H1 (cell line): ENCODE measurements at regions of chrX and their contacts with region 1.

Region 1: DNA sequence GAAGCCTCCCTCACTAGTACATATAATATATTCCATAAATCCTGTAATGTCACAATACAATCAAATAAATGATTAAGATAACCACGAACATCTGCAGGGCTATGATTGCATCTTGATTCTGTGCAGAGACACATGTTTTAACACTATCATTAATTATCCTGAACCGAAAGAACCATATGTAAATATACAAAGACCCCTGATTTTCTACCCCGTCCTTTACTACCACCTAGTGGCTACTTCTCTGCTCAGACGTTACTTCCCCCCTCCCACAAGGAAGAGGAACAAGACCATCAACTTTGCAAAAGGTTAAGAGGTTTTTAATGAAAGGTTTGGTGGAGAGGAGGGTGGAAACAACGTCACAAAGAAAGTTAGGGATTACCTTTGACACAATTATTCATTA is 134.0 kb downstream of the COL4A6 start:
- DNase-seq: no peak
- H3K4me3 ChIP-seq: no peak overlapping the region
- H3K27ac ChIP-seq: no peak overlapping the region
- H3K4me1 ChIP-seq: peaks cover 0 to 3% (median 1%) of the 10 kb centered on the region in 4 experiments; a peak in 3 of 7 replicates
- H3K27me3 ChIP-seq: no peaks in the 10 kb centered on the region
- CTCF ChIP-seq: peak in 2 of 3 experiments; percentile 46 to 51; a peak in 3 of 4 replicates
- EP300 ChIP-seq: no peak
- POLR2A ChIP-seq: no peak
- RAD21 ChIP-seq: peak; percentile 65 to 73

Region 2: DNA sequence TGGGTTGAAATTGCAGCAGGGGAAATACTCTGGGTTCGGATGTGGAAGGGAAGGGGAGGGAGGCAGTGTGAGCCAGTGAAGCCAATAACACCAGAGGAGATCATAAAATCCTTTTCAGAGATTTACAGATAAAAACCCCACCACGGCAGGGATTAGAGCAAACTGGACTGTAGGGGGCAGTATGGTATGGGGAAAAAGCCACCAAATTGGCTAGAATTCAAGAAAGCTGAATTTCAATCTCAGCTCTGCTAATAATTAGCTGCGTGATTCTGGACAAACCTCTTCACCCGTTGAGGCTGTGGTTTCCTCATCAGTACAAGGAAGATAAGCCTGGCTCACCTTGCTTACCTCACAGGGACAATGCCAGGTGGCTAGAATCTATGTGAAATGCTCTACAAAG is 104.5 kb before region 1 on chrX:
- CTCF ChIA-PET with region 1: interaction called, 12 read pairs
- POLR2A ChIA-PET with region 1: no interaction called
- DNase-seq: peak in 1 of 2 experiments; percentile 50
- H3K4me3 ChIP-seq: no peak overlapping the region
- H3K27ac ChIP-seq: no peak overlapping the region
- H3K4me1 ChIP-seq: no peaks in the 10 kb centered on the region
- H3K27me3 ChIP-seq: no peaks in the 10 kb centered on the region
- CTCF ChIP-seq: peak in 2 of 3 experiments; percentile 41 to 61; a peak in 2 of 4 replicates
- EP300 ChIP-seq: no peak
- POLR2A ChIP-seq: no peak
- RAD21 ChIP-seq: peak; percentile 60 to 64

Region 3: GRCh38 chrX:108245459-108245858 is 58.8 kb before region 1 on chrX:
- CTCF ChIA-PET with region 1: interaction called, 11 read pairs
- POLR2A ChIA-PET with region 1: no interaction called
- DNase-seq: no peak
- H3K4me3 ChIP-seq: no peak overlapping the region
- H3K27ac ChIP-seq: no peak overlapping the region
- H3K4me1 ChIP-seq: no peaks in the 10 kb centered on the region
- H3K27me3 ChIP-seq: no peaks in the 10 kb centered on the region
- CTCF ChIP-seq: peak in 1 of 3 experiments; percentile 22; a peak in 1 of 4 replicates
- EP300 ChIP-seq: no peak
- POLR2A ChIP-seq: no peak
- RAD21 ChIP-seq: peak; percentile 15 to 22; a peak in 2 of 4 replicates

Region 4: GRCh38 chrX:108275732-108276131 is 28.5 kb before region 1 on chrX:
- CTCF ChIA-PET with region 1: no interaction called
- POLR2A ChIA-PET with region 1: no interaction called
- DNase-seq: no peak
- H3K4me3 ChIP-seq: no peak overlapping the region
- H3K27ac ChIP-seq: no peak overlapping the region
- H3K4me1 ChIP-seq: no peaks in the 10 kb centered on the region
- H3K27me3 ChIP-seq: no peaks in the 10 kb centered on the region
- CTCF ChIP-seq: no peak
- EP300 ChIP-seq: no peak
- POLR2A ChIP-seq: no peak
- RAD21 ChIP-seq: no peak